ENCODE measurements at regions of chr15 and their contacts with region 1.

Region 1: DNA sequence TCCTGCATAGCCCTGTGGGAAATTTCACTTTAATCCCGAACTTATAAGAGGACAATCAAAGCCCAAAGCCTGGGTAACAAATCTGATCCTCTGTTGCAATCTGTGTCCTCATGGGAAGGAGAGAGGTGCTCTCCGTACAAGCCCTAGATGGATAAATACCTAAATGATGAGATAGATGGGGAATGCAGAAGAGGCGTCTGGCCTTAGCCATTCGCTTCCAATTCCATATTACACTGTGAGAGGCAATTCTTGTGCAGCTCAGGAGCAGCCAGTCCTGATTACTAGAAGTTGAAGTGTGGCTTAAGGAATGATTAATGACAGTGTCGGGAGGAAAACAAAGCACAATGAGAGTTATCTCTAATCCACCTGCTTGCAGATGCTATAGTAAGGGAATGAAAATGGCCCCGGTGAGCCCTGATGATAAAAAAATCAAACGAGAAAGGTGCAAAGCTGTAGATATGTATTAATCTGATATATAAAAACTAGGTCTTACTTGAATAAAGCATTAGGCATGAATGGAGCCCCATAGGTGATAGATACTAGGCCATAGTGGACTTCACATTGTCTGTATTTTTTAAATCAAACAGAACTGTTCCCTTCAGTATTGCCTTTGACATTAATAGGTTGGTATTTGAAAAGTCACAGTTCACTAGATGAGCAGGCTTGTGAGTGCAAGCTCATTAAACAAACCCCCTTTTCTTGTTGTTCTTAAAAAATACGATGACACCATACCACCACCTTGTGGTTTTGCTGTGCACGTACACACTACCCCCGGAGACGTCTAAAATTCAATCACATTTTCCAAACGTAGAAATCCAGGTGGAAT is 54.2 kb upstream of the TMCO5A start:
- DNase-seq: peak; percentile 54
- H3K4me3 Mint-ChIP-seq: no peak overlapping the region
- H3K27ac Mint-ChIP-seq: no peak overlapping the region
- H3K4me1 Mint-ChIP-seq: no peaks in the 10 kb centered on the region
- H3K27me3 Mint-ChIP-seq: peaks cover 7% of the 10 kb centered on the region

Region 2: DNA sequence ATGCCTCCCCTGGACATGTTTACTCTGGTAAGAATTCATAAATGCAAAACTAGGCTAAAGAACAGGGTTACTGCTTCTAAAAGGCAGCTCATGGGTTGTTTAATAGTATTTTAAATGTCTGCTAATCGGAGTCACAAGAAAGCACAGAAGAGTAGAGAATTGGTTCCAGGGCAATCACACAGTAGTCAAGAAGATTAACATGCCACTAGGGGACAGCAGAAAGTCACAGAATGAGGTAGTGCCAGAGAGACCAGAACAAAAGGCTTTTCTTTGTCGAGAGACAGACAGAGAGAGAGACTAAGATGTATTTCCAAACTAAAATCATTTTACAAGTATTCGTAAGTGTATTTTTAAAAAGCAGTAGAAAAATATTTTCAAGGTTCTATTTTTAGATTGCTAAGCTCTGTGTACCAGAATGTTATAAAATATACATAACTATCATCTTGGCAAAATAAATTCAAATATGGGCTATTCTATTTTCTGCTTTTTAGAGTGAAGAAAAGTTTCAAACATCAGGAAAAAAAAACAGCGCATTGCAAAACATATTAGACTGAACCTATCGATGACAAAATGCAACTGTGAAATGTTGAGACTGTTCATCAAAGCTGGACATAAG is 1379.1 kb before region 1 on chr15:
- intact Hi-C with region 1: loop called (anchors 5 kb)
- DNase-seq: peak; percentile 61
- H3K4me3 Mint-ChIP-seq: no peak overlapping the region
- H3K27ac Mint-ChIP-seq: no peak overlapping the region
- H3K4me1 Mint-ChIP-seq: no peaks in the 10 kb centered on the region
- H3K27me3 Mint-ChIP-seq: peaks cover 5% of the 10 kb centered on the region

Region 3: GRCh38 chr15:36883713-36884517 is 996.3 kb before region 1 on chr15:
- intact Hi-C with region 1: loop called (anchors 10 kb)
- DNase-seq: peak; percentile 89
- H3K4me3 Mint-ChIP-seq: no peak overlapping the region
- H3K27ac Mint-ChIP-seq: no peak overlapping the region
- H3K4me1 Mint-ChIP-seq: peaks cover 2% of the 10 kb centered on the region
- H3K27me3 Mint-ChIP-seq: peaks cover 96% of the 10 kb centered on the region

Measured in activated CD4-positive, alpha-beta T cell treated with anti-CD3 and anti-CD28 coated beads, Interleukin-2, amount 10 ng/mL, durations not matched to agents 24 days and 14 days (primary cell).